Aorta (tissue), 5 donors: ENCODE measurements at regions of chr10 and their contacts with region 1.

Region 1: GRCh38 chr10:109922976-109923921 is at the start of gene XPNPEP1:
- DNase-seq: peak; percentile 95
- ATAC-seq: peak; percentile 96
- H3K4me3 ChIP-seq: peak within 1 kb of the TSS; percentile 85 to 92
- H3K27ac ChIP-seq: peak within 1 kb of the TSS; percentile 68 to 92
- H3K4me1 ChIP-seq: peaks cover 0 to 5% of the 10 kb centered on the region in 2 donors
- H3K27me3 ChIP-seq: no peaks in the 10 kb centered on the region
- total RNA-seq, gene XPNPEP1: 47.5 to 68.9 TPM

Region 2: GRCh38 chr10:109883859-109884771 is 39.1 kb before region 1 on chr10:
- intact Hi-C with region 1: loop called in 1 of 2 experiments (anchors 5 kb)
- DNase-seq: peak; percentile 71 to 82
- ATAC-seq: peak; percentile 94
- H3K4me3 ChIP-seq: no peak overlapping the region
- H3K27ac ChIP-seq: peak overlapping the region in 1 of 2 donors; percentile 0
- H3K4me1 ChIP-seq: no peaks in the 10 kb centered on the region
- H3K27me3 ChIP-seq: no peaks in the 10 kb centered on the region

Region 3: GRCh38 chr10:109961174-109962001 is 38.1 kb after region 1 on chr10:
- intact Hi-C with region 1: loop called in 1 of 2 experiments (anchors 5 kb)
- DNase-seq: no peak
- ATAC-seq: no peak
- H3K4me3 ChIP-seq: no peak overlapping the region
- H3K27ac ChIP-seq: no peak overlapping the region
- H3K4me1 ChIP-seq: peaks cover 14 to 22% of the 10 kb centered on the region in 2 donors
- H3K27me3 ChIP-seq: no peaks in the 10 kb centered on the region

Region 4: DNA sequence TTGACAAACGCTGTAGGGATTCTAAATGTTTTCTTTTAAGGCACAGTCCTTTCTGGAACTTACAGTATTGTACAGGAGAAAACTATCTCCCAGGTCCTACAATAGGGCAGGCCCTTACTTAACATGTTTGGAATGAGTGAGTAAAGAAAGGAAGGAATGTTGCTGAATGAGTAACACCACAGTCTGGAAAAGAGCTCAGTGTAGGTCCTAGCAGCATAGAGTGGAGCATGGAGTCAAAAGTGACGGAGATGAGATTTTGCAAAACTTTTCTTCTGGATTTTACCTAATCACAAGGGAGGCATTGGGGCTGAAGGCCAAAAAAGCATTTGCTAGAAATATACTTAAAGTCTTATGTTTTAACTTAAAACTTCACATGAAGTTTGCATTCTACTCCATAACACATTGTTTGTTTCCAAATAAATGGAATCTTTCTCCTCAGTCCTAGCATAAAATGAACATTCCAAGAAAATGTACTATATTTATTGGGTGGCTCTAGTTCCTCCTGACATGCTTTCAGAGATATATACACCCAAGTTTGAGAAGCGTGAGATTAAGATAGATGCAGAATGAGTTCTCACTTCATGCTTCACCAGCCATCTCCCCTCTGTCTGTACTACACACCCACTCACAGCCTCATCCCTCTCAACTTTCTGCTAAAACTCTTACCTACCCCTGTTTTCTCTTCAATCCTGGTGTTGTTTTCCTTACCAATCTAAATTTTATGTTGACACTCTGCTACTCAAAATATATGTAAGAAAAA is 64.4 kb after region 1 on chr10:
- intact Hi-C with region 1: no loop called
- DNase-seq: no peak
- ATAC-seq: peak; percentile 78
- H3K4me3 ChIP-seq: peak overlapping the region in 1 of 2 donors; percentile 24
- H3K27ac ChIP-seq: peak overlapping the region; percentile 67 to 89
- H3K4me1 ChIP-seq: peaks cover 0 to 3% of the 10 kb centered on the region in 2 donors
- H3K27me3 ChIP-seq: no peaks in the 10 kb centered on the region